Posterior vena cava (tissue), 2 donors: ENCODE measurements at regions of chr2 and their contacts with region 1.

Region 1: DNA sequence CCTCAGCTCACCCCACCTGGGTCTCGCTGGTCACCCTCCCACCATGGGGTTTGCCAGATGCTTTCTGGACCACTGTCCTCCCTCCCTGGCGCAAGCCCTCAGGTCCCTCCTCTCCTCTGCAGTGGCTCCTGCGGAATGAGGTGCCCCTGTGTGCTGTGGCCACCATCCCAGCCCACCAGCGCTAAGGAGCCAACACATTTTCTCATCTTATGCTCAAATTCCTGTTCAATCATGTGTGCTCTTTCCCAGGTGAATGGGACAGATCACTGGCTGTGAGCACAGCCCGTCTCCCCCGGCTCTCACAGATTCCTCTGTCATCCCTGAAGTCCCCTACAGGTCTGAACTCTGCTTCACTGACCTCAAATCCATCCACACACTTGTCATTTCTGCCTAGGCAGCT is 15.2 kb upstream of the CCDC74B start:
- DNase-seq: no peak

Region 2: DNA sequence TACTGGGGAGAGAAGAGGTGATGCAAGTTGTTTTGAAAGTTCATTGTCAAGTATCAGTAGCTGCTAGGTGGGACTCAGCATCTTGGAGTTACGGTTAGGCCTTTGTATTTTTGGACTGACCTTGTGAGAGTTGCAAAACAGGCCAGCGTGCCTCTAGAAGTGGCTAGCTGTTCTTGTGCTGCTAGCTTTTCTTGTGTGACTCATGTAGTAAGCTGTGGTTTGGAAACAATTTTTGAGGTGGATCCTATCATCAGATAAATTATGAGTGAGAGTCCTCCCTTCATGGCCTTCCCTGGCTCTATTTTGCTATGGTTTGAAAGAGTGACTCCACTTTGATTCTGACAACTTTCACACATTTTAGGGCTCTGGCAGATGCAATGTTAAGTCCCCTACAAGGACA is 1432.2 kb before region 1 on chr2:
- intact Hi-C with region 1: no loop called
- DNase-seq: no peak

Region 3: GRCh38 chr2:131027566-131028440 is 867.7 kb after region 1 on chr2:
- intact Hi-C with region 1: loop called in 1 of 2 experiments (anchors 5 kb)
- DNase-seq: no peak